GM12878 (cell line): ENCODE measurements at regions of chr4 and their contacts with region 1.

Region 1: GRCh38 chr4:87058356-87059073 is 123.7 kb downstream of the AFF1 start:
- DNase-seq: no peak
- ATAC-seq: peak; percentile 56
- H3K4me3 ChIP-seq: no peak overlapping the region
- H3K27ac ChIP-seq: peak overlapping the region; percentile 4; the same call in 1 of the 2 replicates
- H3K4me1 ChIP-seq: peaks cover 37% of the 10 kb centered on the region
- H3K27me3 ChIP-seq: no peaks in the 10 kb centered on the region
- CTCF ChIP-seq: no peak; a peak in 1 of 6 replicates
- EP300 ChIP-seq: no peak
- POLR2A ChIP-seq: no peak
- RAD21 ChIP-seq: peak; percentile 43; the same call in 1 of the 2 replicates

Region 2: GRCh38 chr4:87026800-87027495 is 31.6 kb before region 1 on chr4:
- CTCF ChIA-PET with region 1: no interaction called
- POLR2A ChIA-PET with region 1: interaction called, 4 read pairs
- RAD21 ChIA-PET with region 1: interaction called, 5 read pairs
- SMC1A ChIA-PET with region 1: interaction called, 12 read pairs
- in situ Hi-C with region 1: no loop called
- intact Hi-C with region 1: no loop called
- DNase-seq: peak; percentile 91
- ATAC-seq: peak; percentile 92
- H3K4me3 ChIP-seq: peak overlapping the region; percentile 8; the same call in 1 of the 2 replicates
- H3K27ac ChIP-seq: peak overlapping the region; percentile 98
- H3K4me1 ChIP-seq: peaks cover 46% of the 10 kb centered on the region
- H3K27me3 ChIP-seq: no peaks in the 10 kb centered on the region
- CTCF ChIP-seq: no peak
- EP300 ChIP-seq: peak; percentile 68 to 73; a peak in 2 of 4 replicates
- POLR2A ChIP-seq: no peak
- RAD21 ChIP-seq: peak; percentile 30; the same call in 1 of the 2 replicates

Region 3: DNA sequence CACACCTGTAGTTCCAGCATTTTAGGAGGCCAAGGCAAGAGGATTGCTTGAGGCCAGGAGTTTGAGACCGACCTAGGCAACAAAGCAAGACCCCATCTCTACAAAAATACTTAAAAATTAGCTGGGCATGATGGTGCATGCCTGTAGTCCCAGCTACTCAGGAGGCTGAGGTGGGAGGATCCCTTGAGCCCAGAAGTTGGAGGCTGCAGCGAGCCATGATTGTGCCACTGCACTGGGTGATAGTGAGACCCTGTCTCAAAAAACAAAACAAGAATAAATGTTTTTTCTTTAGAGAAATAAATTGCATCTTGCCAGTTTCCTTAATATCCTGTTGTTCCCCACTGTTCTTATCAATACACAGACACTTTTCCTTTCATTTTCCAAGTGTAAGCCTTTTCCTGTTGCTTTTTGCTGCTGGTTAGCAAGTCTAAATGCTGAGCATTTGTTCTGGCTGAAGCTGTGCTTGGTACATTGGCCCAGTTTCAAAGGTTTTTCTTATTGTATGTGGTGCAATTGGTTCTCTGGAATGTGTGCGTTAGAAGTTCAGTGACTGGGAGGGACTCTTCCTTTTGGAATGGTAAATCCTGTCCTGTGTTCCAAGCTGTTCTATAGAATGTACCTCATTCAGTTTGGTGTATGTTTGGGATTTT is 25.5 kb before region 1 on chr4:
- CTCF ChIA-PET with region 1: interaction called, 5 read pairs
- POLR2A ChIA-PET with region 1: interaction called, 4 read pairs
- RAD21 ChIA-PET with region 1: interaction called, 5 read pairs
- SMC1A ChIA-PET with region 1: interaction called, 12 read pairs
- in situ Hi-C with region 1: no loop called
- intact Hi-C with region 1: no loop called
- DNase-seq: no peak
- ATAC-seq: no peak
- H3K4me3 ChIP-seq: no peak overlapping the region
- H3K27ac ChIP-seq: peak overlapping the region; percentile 11; the same call in 1 of the 2 replicates
- H3K4me1 ChIP-seq: peaks cover 52% of the 10 kb centered on the region
- H3K27me3 ChIP-seq: no peaks in the 10 kb centered on the region
- CTCF ChIP-seq: no peak
- EP300 ChIP-seq: no peak
- POLR2A ChIP-seq: no peak
- RAD21 ChIP-seq: no peak

Region 4: GRCh38 chr4:87038837-87039615 is 19.5 kb before region 1 on chr4:
- CTCF ChIA-PET with region 1: interaction called, 6 read pairs
- POLR2A ChIA-PET with region 1: interaction called, 11 read pairs
- RAD21 ChIA-PET with region 1: interaction called, 12 read pairs
- SMC1A ChIA-PET with region 1: interaction called, 57 read pairs
- in situ Hi-C with region 1: no loop called
- intact Hi-C with region 1: no loop called
- DNase-seq: no peak
- ATAC-seq: peak; percentile 83
- H3K4me3 ChIP-seq: peak overlapping the region; percentile 5; the same call in 1 of the 2 replicates
- H3K27ac ChIP-seq: peak overlapping the region; percentile 3
- H3K4me1 ChIP-seq: peaks cover 52% of the 10 kb centered on the region
- H3K27me3 ChIP-seq: no peaks in the 10 kb centered on the region
- CTCF ChIP-seq: no peak
- EP300 ChIP-seq: no peak
- POLR2A ChIP-seq: no peak
- RAD21 ChIP-seq: no peak

Region 5: GRCh38 chr4:87073199-87074120 is 14.9 kb after region 1 on chr4:
- CTCF ChIA-PET with region 1: interaction called, 3 read pairs
- POLR2A ChIA-PET with region 1: interaction called, 4 read pairs
- RAD21 ChIA-PET with region 1: interaction called, 5 read pairs
- SMC1A ChIA-PET with region 1: interaction called, 17 read pairs
- in situ Hi-C with region 1: no loop called
- intact Hi-C with region 1: no loop called
- DNase-seq: peak; percentile 93
- ATAC-seq: peak; percentile 93
- H3K4me3 ChIP-seq: peak overlapping the region; percentile 65; the same call in 1 of the 2 replicates
- H3K27ac ChIP-seq: peak overlapping the region; percentile 98
- H3K4me1 ChIP-seq: peaks cover 17% of the 10 kb centered on the region
- H3K27me3 ChIP-seq: no peaks in the 10 kb centered on the region
- CTCF ChIP-seq: no peak
- EP300 ChIP-seq: peak; percentile 65 to 67; a peak in 3 of 4 replicates
- POLR2A ChIP-seq: peak; percentile 62
- RAD21 ChIP-seq: no peak